ENCODE measurements at regions of chr15 and their contacts with region 1.

Region 1: GRCh38 chr15:78618490-78618934 is 2.3 kb downstream of the CHRNA3 start:
- DNase-seq: peak; percentile 89 to 96
- ATAC-seq: peak; percentile 77 to 78
- H3K4me3 ChIP-seq: no peak overlapping the region
- H3K27ac ChIP-seq: no peak overlapping the region
- H3K4me1 ChIP-seq: peaks cover 14% of the 10 kb centered on the region; the same call in 2 of the 3 replicates
- CTCF ChIP-seq: peak; percentile 97
- EP300 ChIP-seq: no peak
- POLR2A ChIP-seq: no peak
- RAD21 ChIP-seq: peak; percentile 92 to 96

Region 2: DNA sequence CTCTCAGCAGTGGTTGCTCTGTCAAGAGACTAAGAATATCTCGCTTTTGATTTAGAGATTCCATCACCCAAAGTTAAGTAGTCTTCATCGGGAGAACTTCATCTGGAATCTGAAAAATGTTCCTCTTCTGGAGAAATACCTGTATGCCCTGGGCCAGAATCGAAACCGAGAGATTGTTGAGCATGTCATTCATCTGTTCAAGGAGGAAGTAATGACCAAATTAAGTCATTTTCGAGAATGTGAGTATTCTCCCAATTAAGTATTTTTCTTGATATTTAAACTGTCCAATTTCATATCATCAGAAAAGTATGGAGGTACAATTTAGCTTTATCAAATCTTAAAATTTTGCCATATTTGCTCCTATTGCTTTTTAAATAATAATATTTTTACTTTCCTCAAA is 91.2 kb before region 1 on chr15:
- CTCF ChIA-PET with region 1: no interaction called
- POLR2A ChIA-PET with region 1: no interaction called
- DNase-seq: no peak
- ATAC-seq: no peak
- H3K4me3 ChIP-seq: no peak overlapping the region
- H3K27ac ChIP-seq: no peak overlapping the region
- H3K4me1 ChIP-seq: no peaks in the 10 kb centered on the region
- CTCF ChIP-seq: no peak
- EP300 ChIP-seq: no peak
- POLR2A ChIP-seq: no peak
- RAD21 ChIP-seq: no peak

Region 3: GRCh38 chr15:78599189-78599588 is 19.3 kb before region 1 on chr15:
- CTCF ChIA-PET with region 1: interaction called, 12 read pairs
- POLR2A ChIA-PET with region 1: no interaction called
- DNase-seq: no peak
- ATAC-seq: no peak
- H3K4me3 ChIP-seq: no peak overlapping the region
- H3K27ac ChIP-seq: no peak overlapping the region
- H3K4me1 ChIP-seq: no peaks in the 10 kb centered on the region
- CTCF ChIP-seq: no peak
- EP300 ChIP-seq: no peak
- POLR2A ChIP-seq: no peak
- RAD21 ChIP-seq: no peak

Region 4: GRCh38 chr15:78604420-78604819 is 14.1 kb before region 1 on chr15:
- CTCF ChIA-PET with region 1: interaction called, 12 read pairs
- POLR2A ChIA-PET with region 1: no interaction called
- DNase-seq: no peak
- ATAC-seq: peak in 1 of 2 experiments; percentile 33; a peak in 3 of 6 replicates
- H3K4me3 ChIP-seq: no peak overlapping the region
- H3K27ac ChIP-seq: no peak overlapping the region
- H3K4me1 ChIP-seq: no peaks in the 10 kb centered on the region
- CTCF ChIP-seq: no peak
- EP300 ChIP-seq: no peak
- POLR2A ChIP-seq: no peak
- RAD21 ChIP-seq: no peak

Region 5: GRCh38 chr15:78739996-78740903 is 121.7 kb after region 1 on chr15:
- CTCF ChIA-PET with region 1: interaction called, 27 read pairs
- POLR2A ChIA-PET with region 1: interaction called, 4 read pairs
- DNase-seq: peak in 1 of 2 experiments; percentile 88
- ATAC-seq: peak; percentile 84 to 97
- H3K4me3 ChIP-seq: no peak overlapping the region
- H3K27ac ChIP-seq: peak overlapping the region; percentile 65 to 80
- H3K4me1 ChIP-seq: peaks cover 4% of the 10 kb centered on the region
- CTCF ChIP-seq: peak; percentile 69
- EP300 ChIP-seq: no peak
- POLR2A ChIP-seq: no peak
- RAD21 ChIP-seq: peak; percentile 60 to 67